Right ventricle myocardium superior (tissue), 1 donor: ENCODE measurements at regions of chr12 and their contacts with region 1.

Region 1: DNA sequence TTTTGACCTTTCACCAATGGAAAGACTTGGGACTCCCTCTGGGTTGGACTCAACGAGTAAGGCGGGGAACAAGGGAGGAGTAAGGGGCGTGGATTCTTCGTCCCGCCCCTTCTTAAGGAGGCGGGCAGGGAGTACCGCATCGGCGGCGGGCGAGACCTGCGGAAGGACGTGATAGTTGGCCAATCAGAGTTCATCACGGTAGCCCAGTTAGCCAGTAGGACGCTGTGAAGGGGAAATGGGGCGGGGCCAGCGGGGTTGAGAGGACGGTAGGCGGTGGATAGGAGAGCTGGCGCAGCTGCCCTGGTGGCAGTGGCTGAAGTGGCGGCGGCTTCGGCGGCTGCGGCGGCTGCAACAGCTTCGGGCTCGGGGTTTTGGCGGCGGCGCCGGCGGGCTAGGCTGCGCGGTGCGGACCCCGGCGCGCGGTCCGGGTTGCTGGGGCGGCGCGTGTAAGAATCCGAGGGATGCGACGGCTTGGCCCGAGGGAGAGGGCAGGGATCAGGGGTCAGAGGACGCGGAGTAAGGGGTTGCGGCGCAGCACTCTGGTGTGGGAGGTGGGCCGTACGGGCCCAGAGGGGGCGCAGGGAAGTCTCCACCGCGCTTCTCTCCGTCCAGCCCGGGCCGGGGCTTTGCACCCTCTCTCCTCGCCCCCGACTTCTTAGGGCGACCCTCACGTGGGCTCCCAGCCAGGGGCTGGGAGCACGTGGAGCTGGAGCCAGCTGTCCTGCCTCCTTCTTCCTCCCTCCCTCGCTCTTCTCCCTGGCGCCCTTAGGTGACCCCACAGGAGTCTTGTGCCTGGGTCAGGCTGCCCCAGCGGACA is at the start of gene TPCN1:
- DNase-seq: peak; percentile 100
- ATAC-seq: peak; percentile 94
- total RNA-seq, gene TPCN1: 128 TPM

Region 2: DNA sequence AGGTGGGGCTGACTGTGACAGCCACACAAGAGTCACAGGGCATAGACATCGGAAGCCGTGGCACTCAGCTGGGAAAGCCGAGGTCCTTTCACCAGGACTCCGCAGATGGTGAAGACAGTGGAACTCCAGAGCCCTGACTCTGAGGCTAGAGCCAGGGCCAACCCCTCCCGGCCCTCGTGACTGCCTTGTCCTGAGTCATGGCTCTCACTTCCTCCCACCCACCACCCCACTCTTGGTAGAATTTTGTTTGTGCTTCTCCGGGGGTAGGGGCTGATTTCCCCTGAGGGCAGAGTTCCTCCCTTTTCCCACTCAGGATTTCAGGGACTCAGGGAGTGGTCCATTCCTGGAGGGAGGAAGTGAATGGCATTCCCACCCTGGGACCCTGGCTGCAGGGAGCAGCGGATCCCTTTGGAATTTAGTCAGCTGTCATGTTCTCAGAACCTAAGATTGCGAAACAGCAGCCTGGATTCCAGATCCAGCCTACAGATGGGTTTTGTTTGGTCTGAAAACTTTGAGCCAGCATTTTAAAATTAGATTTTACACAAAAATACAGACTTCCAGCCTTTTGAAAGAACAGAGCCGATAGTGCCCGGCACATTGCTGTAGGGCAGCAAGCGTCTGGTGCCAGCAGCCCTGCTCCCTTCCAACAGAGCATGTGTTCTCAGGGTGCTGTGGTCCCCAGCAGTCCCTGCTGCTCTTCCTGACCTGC is 50.6 kb after region 1 on chr12:
- intact Hi-C with region 1: loop called (anchors 10 kb)
- DNase-seq: peak; percentile 91
- ATAC-seq: peak; percentile 88

Region 3: GRCh38 chr12:114136631-114137030 is 915.2 kb after region 1 on chr12:
- intact Hi-C with region 1: no loop called
- DNase-seq: no peak
- ATAC-seq: no peak